ENCODE measurements at regions of chr18 and their contacts with region 1.

Region 1: DNA sequence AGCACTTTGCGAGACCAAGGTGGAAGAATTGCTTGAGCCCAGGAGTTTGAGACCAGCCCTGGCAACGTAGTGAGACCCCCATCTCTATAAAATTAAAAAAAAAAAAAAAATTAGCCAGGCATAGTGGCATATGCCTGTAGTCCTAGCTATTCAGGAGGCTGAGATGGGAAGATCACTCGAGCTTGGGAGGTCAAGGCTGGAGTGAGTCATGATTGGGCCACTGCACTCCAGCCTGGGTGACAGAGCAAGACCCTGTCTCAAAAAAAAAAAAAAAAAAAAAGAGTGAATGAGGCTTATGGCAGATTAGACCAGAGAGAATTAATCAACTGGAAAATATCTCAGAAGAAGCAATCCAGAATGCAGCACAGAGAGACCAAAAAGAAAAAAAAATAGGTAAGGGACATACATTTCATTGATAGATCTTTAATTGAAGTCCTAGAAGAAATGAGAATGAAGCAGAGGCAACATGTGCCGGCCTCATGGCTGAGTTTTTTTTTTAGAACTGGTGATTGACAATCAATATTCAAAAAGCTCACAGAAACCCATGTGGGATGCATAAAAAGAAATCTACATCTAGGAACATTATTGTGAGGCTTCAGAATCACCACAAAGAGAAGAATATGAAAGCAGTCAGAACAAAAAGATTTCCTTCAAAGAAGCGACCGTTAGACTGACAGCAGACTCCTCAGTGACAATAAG is 32.2 kb upstream of the ELAC1 start:
- DNase-seq: no peak
- ATAC-seq: no peak

Region 2: GRCh38 chr18:50917021-50917420 is 18.6 kb before region 1 on chr18:
- intact Hi-C with region 1: loop called (anchors 2 kb)
- DNase-seq: no peak
- ATAC-seq: no peak

Measured in Right ventricle myocardium superior (tissue), 1 donor.